ENCODE measurements at regions of chr17 and their contacts with region 1.

Region 1: GRCh38 chr17:40474419-40475002 is 26.9 kb downstream of the TNS4 start:
- DNase-seq: peak; percentile 70
- H3K4me3 Mint-ChIP-seq: no peak overlapping the region
- H3K27ac Mint-ChIP-seq: peak overlapping the region; percentile 73
- H3K4me1 Mint-ChIP-seq: peaks cover 43% of the 10 kb centered on the region
- H3K27me3 Mint-ChIP-seq: no peaks in the 10 kb centered on the region
- CTCF ChIP-seq: no peak

Region 2: GRCh38 chr17:40417609-40418427 is 56.7 kb before region 1 on chr17 and contains the start of gene TOP2A:
- CTCF ChIA-PET with region 1: interaction called, 5 read pairs
- POLR2A ChIA-PET with region 1: interaction called, 10 read pairs
- intact Hi-C with region 1: no loop called
- DNase-seq: peak; percentile 100
- H3K4me3 Mint-ChIP-seq: peak within 1 kb of the TSS; percentile 96
- H3K27ac Mint-ChIP-seq: peak within 1 kb of the TSS; percentile 82
- H3K4me1 Mint-ChIP-seq: peaks cover 8% of the 10 kb centered on the region
- H3K27me3 Mint-ChIP-seq: no peaks in the 10 kb centered on the region
- CTCF ChIP-seq: no peak
- total RNA-seq, gene TOP2A: 100 and 151 TPM in 2 replicates

Region 3: DNA sequence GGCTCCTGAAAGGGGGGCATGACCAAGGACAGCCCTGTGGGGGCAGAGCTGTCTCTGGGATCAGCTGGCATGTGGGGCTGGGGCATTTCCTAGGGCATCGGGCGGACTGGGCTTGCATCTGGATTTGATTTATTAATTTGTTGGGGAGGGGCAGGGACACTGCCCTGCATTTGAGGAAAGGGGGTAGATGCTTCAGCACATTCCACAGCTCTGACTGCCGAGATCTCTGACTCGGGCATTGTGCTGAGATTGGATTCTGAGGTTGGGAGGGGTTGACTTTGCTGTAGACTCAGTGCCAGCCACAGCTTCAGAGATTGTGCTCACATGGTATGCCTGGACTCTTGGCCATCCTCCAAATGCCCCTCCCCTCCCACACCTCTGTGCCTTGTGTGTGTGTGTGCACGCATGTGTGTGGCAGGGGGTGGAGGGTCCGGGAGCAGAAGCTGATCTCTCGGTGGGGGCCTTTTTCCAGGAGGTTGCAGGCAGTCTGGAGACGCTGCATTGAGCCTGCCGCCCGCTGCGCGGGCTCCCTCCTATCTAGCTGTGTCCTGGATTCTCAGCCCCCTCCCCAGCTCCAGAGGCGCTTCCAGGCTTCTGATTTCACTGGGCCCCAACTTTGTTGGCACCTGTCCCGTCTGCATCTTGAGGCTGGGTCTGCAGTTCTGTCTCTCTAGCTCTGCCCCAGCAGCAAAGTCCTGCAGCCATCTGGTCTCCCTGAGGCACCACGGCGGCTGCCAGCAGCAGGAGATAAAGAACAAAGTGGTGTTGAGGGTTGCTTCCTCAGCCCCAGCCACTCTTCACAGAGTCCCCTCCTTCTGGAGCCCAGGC is 16.3 kb before region 1 on chr17:
- CTCF ChIA-PET with region 1: no interaction called
- POLR2A ChIA-PET with region 1: interaction called, 79 read pairs
- intact Hi-C with region 1: no loop called
- DNase-seq: no peak
- H3K4me3 Mint-ChIP-seq: no peak overlapping the region
- H3K27ac Mint-ChIP-seq: no peak overlapping the region
- H3K4me1 Mint-ChIP-seq: peaks cover 19% of the 10 kb centered on the region
- H3K27me3 Mint-ChIP-seq: peaks cover 11% of the 10 kb centered on the region
- CTCF ChIP-seq: no peak

Region 4: DNA sequence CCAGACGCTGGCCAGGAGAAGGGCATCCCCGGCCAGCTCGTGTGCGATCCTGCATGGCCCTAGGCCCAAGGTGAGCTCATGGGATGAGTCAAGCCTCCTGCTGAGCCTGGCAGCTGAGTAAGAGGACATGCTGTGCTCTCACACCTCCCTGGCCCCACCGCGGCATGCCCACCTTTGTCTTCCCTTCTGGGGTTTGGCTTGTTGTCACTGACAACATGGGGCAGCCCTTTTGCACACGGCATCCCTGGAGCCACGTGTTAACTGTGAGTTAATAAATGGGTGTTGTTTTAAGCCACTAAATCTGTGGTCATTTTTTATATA is 35.8 kb after region 1 on chr17:
- CTCF ChIA-PET with region 1: interaction called, 5 read pairs
- POLR2A ChIA-PET with region 1: interaction called, 31 read pairs
- intact Hi-C with region 1: no loop called
- DNase-seq: peak; percentile 99
- H3K4me3 Mint-ChIP-seq: peak overlapping the region; percentile 48
- H3K27ac Mint-ChIP-seq: peak overlapping the region; percentile 95
- H3K4me1 Mint-ChIP-seq: peaks cover 56% of the 10 kb centered on the region
- H3K27me3 Mint-ChIP-seq: no peaks in the 10 kb centered on the region
- CTCF ChIP-seq: no peak

Region 5: GRCh38 chr17:40542558-40543411 is 68.3 kb after region 1 on chr17:
- CTCF ChIA-PET with region 1: interaction called, 5 read pairs
- POLR2A ChIA-PET with region 1: interaction called, 472 read pairs
- intact Hi-C with region 1: no loop called
- DNase-seq: peak; percentile 96
- H3K4me3 Mint-ChIP-seq: no peak overlapping the region
- H3K27ac Mint-ChIP-seq: peak overlapping the region; percentile 96
- H3K4me1 Mint-ChIP-seq: peaks cover 21% of the 10 kb centered on the region
- H3K27me3 Mint-ChIP-seq: no peaks in the 10 kb centered on the region
- CTCF ChIP-seq: no peak

Region 6: GRCh38 chr17:40582328-40582901 is 107.9 kb after region 1 on chr17:
- CTCF ChIA-PET with region 1: no interaction called
- POLR2A ChIA-PET with region 1: interaction called, 17 read pairs
- intact Hi-C with region 1: no loop called
- DNase-seq: peak; percentile 94
- H3K4me3 Mint-ChIP-seq: peak overlapping the region; percentile 19
- H3K27ac Mint-ChIP-seq: no peak overlapping the region
- H3K4me1 Mint-ChIP-seq: peaks cover 15% of the 10 kb centered on the region
- H3K27me3 Mint-ChIP-seq: peaks cover 21% of the 10 kb centered on the region
- CTCF ChIP-seq: no peak

Region 7: GRCh38 chr17:41844971-41845370 is 1370.5 kb after region 1 on chr17:
- CTCF ChIA-PET with region 1: no interaction called
- POLR2A ChIA-PET with region 1: no interaction called
- intact Hi-C with region 1: no loop called
- DNase-seq: no peak
- H3K4me3 Mint-ChIP-seq: no peak overlapping the region
- H3K27ac Mint-ChIP-seq: no peak overlapping the region
- H3K4me1 Mint-ChIP-seq: no peaks in the 10 kb centered on the region
- H3K27me3 Mint-ChIP-seq: no peaks in the 10 kb centered on the region
- CTCF ChIP-seq: no peak